CD14-positive monocyte (primary cell): ENCODE measurements at regions of chr17 and their contacts with region 1.

Region 1: GRCh38 chr17:68777243-68777855 is 176.2 kb upstream of the FAM20A start:
- DNase-seq: peak; percentile 23 to 53 (median 45)
- H3K4me3 ChIP-seq: no peak overlapping the region
- H3K4me3 Mint-ChIP-seq: no peak overlapping the region
- H3K27ac ChIP-seq: no peak overlapping the region
- H3K27ac Mint-ChIP-seq: peak overlapping the region in 1 of 7 donors; percentile 35
- H3K4me1 ChIP-seq: peaks cover 2 to 4% of the 10 kb centered on the region in 2 donors
- H3K4me1 Mint-ChIP-seq: peaks cover 20% of the 10 kb centered on the region
- H3K27me3 ChIP-seq: no peaks in the 10 kb centered on the region
- H3K27me3 Mint-ChIP-seq: peaks cover 0 to 3% (median 2%) of the 10 kb centered on the region in 3 donors
- CTCF ChIP-seq: peak; percentile 82

Region 2: DNA sequence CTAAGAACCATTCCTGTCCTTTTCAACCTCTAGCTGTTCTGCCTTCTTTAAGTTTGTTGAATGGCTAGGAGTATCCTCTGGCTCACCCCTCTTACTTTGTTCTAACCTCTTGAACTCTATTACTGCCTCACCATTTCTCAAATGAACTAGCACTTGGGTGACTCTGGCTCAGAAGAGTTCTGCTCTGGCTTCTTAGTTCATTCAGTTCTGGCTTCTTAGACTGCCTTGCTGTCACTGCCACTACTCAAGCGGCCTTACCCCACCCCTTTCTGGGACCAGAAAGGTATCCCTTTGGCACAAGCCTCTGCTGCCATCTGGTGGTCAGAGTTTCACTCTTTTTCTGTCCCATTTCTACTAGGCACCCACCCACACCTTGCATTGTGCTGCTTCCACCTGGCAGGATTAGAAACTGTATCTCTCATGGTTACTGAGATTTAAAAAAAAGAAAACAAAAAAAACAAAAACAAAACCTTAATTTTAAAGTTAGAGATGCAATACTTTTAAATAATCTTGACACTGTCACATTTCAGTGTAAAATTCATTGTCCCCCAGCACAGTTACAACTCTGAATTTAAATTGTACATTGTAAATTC is 458.1 kb after region 1 on chr17:
- intact Hi-C with region 1: loop called (anchors 2 to 5 kb)
- DNase-seq: peak; percentile 75 to 84 (median 82)
- H3K4me3 ChIP-seq: no peak overlapping the region
- H3K4me3 Mint-ChIP-seq: no peak overlapping the region
- H3K27ac ChIP-seq: peak overlapping the region in 1 of 2 donors; percentile 12
- H3K27ac Mint-ChIP-seq: peak overlapping the region in 5 of 7 donors; percentile 6 to 71 (median 65)
- H3K4me1 ChIP-seq: peaks cover 5 to 6% of the 10 kb centered on the region in 2 donors
- H3K4me1 Mint-ChIP-seq: peaks cover 5% of the 10 kb centered on the region
- H3K27me3 ChIP-seq: no peaks in the 10 kb centered on the region
- H3K27me3 Mint-ChIP-seq: no peaks in the 10 kb centered on the region
- CTCF ChIP-seq: peak; percentile 89

Region 3: DNA sequence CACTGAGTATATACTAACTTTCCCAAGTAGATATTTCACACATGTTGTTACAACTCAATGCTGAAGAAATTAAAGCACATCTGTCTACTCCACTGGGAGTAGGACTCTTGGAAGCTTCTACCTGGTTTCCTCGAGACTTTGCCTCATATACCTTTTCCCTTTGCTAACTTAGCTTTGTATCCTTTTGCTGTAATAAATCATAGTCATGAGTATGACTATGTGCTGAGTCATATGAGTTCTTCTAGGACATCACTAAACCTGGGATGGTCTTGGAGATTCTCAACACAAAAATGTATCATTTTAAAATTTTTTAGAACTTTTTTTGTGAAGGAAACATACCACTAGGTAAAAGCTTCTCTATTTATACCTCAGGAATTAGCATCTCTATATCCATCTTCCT is 509.8 kb after region 1 on chr17:
- intact Hi-C with region 1: no loop called
- DNase-seq: no peak
- H3K4me3 ChIP-seq: no peak overlapping the region
- H3K4me3 Mint-ChIP-seq: no peak overlapping the region
- H3K27ac ChIP-seq: no peak overlapping the region
- H3K27ac Mint-ChIP-seq: no peak overlapping the region
- H3K4me1 ChIP-seq: no peaks in the 10 kb centered on the region
- H3K4me1 Mint-ChIP-seq: peaks cover 2% of the 10 kb centered on the region
- H3K27me3 ChIP-seq: no peaks in the 10 kb centered on the region
- H3K27me3 Mint-ChIP-seq: no peaks in the 10 kb centered on the region
- CTCF ChIP-seq: no peak